ENCODE measurements at regions of chr2 and their contacts with region 1.

Region 1: GRCh38 chr2:16069933-16070647 is 129.7 kb downstream of the MYCN start:
- DNase-seq: peak; percentile 23 to 96 (median 89)
- H3K4me3 ChIP-seq: peak overlapping the region in 32 of 59 donors; percentile 0 to 55 (median 30)
- H3K27ac ChIP-seq: peak overlapping the region; percentile 83 to 100 (median 96)
- H3K27me3 ChIP-seq: no peaks in the 10 kb centered on the region
- CTCF ChIP-seq: peak in 9 of 56 donors; percentile 2 to 30 (median 18)

Region 2: GRCh38 chr2:15730545-15731212 is 339.4 kb before region 1 on chr2:
- intact Hi-C with region 1: loop called in 1 of 2 experiments (anchors 5 kb)
- DNase-seq: peak; percentile 24 to 95 (median 92)
- H3K4me3 ChIP-seq: no peak overlapping the region
- H3K27ac ChIP-seq: peak overlapping the region in 15 of 59 donors; percentile 2 to 68 (median 45)
- H3K27me3 ChIP-seq: no peaks in the 10 kb centered on the region
- CTCF ChIP-seq: peak in 4 of 56 donors; percentile 13 to 27 (median 24)

Region 3: DNA sequence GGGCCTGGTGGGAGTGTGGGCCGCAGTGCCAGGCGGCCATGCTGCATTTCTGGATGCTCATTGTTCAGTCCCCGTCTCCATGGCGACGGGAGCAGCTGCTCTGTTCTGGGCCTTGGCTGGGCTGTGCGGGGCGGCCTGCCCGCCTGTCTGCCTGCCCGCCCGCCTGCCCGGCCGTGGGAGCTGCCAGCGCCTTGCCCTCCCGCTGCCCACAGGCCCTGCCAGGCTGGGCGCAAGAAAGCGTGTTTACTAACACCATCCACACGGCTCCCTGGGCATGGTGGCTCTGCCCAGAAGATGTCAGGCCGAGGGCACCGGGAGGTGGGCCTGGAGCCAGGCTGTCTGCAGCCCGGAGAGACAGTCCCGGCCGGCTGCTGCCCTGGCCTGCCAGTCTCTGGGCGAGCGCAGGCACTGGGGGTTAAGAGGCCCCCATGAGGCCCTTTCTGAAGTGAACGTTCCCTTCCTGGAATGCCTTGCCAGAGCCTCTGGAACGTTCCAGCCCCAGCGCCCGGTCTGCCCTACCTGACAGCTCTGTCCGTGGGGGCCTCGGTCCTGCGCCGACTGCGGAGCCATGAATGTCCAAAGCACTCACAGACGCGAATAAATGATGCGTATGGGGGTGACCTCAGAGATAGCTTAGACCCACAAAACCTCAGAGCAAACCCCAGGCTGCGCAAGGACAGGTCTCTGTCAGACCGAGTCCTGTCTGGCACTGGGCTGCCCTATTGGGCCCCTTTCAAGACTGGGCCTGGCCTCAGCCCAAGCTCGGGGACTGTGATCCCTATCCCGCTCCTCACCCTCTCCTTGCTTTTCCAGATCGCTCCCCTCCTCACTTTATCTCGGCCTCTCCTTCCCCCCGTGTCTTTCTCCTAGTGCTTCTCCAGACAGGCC is 85.5 kb before region 1 on chr2:
- intact Hi-C with region 1: loop called (anchors 1 kb)
- DNase-seq: peak; percentile 87 to 95 (median 92)
- H3K4me3 ChIP-seq: peak overlapping the region in 22 of 59 donors; percentile 0 to 37 (median 19)
- H3K27ac ChIP-seq: peak overlapping the region; percentile 64 to 96 (median 91)
- H3K27me3 ChIP-seq: no peaks in the 10 kb centered on the region
- CTCF ChIP-seq: peak in 20 of 56 donors; percentile 6 to 42 (median 21)

Region 4: DNA sequence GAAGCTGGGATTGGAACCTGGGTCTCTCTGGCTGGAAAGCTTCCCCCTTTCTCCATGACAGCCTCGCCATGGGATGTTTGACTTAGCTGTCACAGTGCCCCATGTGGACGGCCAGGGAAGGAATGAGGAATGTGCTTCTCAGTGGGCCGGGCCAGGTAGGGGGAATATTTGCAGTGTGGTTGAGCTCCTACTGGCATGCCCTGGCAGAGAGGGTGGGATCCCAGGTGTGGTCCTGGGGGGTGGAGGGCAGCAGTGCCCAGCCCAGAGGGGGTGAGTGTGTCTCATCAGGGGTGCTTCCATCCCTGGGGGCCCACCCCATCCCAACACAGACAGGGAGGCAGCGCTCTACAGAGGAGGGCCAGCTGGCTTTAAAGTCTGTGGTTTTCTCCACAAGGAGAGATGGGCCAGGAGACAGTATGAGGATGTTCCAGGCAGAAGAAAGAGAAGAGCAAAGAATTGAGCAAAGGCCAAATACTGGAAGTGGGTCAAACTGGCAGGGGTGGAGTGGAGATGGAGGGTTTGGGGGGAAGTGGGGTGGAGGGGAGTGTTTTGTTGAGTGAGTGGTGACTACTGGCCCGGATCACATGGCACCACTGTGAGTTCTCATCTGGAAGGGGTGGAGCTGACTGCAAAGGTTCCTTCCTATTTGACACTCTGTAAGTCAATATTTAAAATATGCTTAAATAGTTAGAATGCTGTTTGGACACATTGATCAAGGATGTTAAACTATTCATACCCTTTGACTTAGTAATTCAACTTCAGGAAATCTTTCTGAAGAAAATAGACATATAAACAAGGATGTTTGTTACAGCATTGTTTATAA is 35.7 kb before region 1 on chr2:
- intact Hi-C with region 1: loop called (anchors 1 to 2 kb)
- DNase-seq: no peak
- H3K4me3 ChIP-seq: no peak overlapping the region
- H3K27ac ChIP-seq: peak overlapping the region in 12 of 59 donors; percentile 3 to 73 (median 36)
- H3K27me3 ChIP-seq: peaks cover 0 to 3% (median 0%) of the 10 kb centered on the region in 45 donors
- CTCF ChIP-seq: peak in 12 of 56 donors; percentile 10 to 33 (median 20)

Region 5: DNA sequence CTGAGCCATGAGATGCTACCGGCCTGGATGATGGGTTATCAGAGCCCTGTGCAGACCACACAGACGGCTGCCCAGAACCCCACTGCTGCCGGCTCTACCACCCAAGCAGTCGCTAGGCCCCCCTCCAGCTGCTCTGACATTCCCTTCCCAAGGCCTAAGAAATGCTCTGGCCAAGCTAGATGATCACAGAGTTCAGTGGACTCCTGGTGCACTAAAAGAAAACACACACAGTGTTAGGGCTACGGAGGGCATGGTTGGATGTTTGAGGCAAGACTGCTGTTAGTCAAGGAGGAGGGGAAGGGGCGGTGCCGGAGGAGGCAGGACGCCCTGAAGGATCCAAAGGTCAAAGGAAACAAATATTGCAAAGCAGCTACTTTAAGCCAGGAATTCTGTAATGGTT is 44.7 kb after region 1 on chr2:
- intact Hi-C with region 1: no loop called
- DNase-seq: no peak
- H3K4me3 ChIP-seq: no peak overlapping the region
- H3K27ac ChIP-seq: no peak overlapping the region
- H3K27me3 ChIP-seq: no peaks in the 10 kb centered on the region
- CTCF ChIP-seq: no peak

Region 6: GRCh38 chr2:16281451-16282336 is 211.6 kb after region 1 on chr2:
- intact Hi-C with region 1: loop called in 1 of 2 experiments (anchors 5 kb)
- DNase-seq: peak in 5 of 10 donors; percentile 6 to 57 (median 38)
- H3K4me3 ChIP-seq: no peak overlapping the region
- H3K27ac ChIP-seq: no peak overlapping the region
- H3K27me3 ChIP-seq: no peaks in the 10 kb centered on the region
- CTCF ChIP-seq: peak; percentile 26 to 84 (median 68)

Measured in dorsolateral prefrontal cortex (tissue), 120 donors.